Aorta (tissue), 5 donors: ENCODE measurements at regions of chr1 and their contacts with region 1.

Region 1: DNA sequence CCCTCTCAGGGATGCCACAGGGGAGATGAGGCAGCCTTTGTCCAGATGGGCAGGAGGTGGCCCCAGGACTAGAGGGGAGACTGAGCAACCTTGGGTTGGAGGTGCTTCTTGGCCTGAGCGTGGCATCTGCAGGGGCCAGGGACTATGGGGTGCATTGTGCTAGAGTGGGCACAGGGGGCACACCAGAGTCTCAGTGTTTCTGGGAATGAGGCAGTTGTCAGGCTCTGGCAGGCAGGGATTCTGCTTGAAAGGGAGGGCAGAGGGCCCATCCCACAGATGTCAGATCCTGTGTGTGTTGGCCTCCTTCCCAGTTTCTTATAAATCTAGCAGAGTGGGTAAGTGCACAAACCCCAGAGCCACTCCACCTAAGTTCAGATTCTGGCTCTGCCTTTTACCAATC is 13.7 kb downstream of the LGR6 start:
- DNase-seq: peak in 1 of 2 donors; percentile 71
- ATAC-seq: peak; percentile 62
- H3K4me3 ChIP-seq: no peak overlapping the region
- H3K27ac ChIP-seq: no peak overlapping the region
- H3K4me1 ChIP-seq: no peaks in the 10 kb centered on the region
- H3K27me3 ChIP-seq: no peaks in the 10 kb centered on the region

Region 2: DNA sequence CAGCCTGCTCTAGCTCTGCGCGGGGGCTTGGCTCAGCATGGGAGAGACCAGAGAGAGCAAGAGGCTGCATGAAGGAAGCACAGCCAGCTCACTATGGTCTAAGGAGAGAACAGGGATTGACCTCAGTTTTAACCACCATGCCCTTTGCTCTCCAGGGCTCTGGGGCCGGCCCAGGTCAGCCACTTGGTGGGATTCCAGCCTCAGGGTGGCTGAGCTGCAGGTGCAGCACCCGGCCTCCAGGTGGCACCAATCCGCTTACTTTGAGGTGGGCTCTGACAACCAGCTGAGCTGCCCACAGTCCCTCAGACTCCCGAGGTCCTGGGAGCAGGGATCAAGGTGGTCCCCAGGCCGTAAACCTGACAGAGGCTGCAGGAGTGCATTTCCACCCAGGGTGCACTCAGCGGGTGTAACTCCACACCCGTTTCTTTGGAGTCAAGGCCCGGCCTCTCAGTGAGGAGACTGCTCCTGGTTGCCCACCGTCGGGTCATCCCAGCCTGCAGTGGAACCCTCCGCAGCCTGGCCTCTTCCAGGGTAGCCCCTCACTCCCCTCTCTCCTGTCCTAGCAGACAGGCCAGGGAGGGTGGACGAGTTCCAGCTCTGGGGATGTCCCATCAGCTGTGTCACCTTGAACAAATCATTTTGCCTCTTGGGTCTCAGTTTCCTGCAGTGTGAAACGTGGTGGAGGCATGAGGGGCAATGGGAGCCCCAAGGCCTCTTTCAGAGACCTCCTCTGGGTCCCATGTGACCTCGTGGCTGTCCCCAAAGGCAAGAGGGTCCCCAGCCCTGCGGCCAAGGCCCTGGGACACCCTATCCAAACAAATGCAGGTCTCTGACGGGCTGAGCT is 14.3 kb before region 1 on chr1:
- intact Hi-C with region 1: loop called in 1 of 2 experiments (anchors 1 kb)
- DNase-seq: peak; percentile 67 to 90
- ATAC-seq: peak; percentile 79
- H3K4me3 ChIP-seq: peak overlapping the region; percentile 64 to 89
- H3K27ac ChIP-seq: peak overlapping the region in 1 of 2 donors; percentile 84
- H3K4me1 ChIP-seq: no peaks in the 10 kb centered on the region
- H3K27me3 ChIP-seq: no peaks in the 10 kb centered on the region

Region 3: GRCh38 chr1:202241376-202242079 is 34.2 kb after region 1 on chr1:
- intact Hi-C with region 1: loop called in 1 of 2 experiments (anchors 5 kb)
- DNase-seq: peak; percentile 82 to 88
- ATAC-seq: peak; percentile 80
- H3K4me3 ChIP-seq: no peak overlapping the region
- H3K27ac ChIP-seq: peak overlapping the region; percentile 34 to 46
- H3K4me1 ChIP-seq: peaks cover 0 to 4% of the 10 kb centered on the region in 2 donors
- H3K27me3 ChIP-seq: no peaks in the 10 kb centered on the region

Region 4: DNA sequence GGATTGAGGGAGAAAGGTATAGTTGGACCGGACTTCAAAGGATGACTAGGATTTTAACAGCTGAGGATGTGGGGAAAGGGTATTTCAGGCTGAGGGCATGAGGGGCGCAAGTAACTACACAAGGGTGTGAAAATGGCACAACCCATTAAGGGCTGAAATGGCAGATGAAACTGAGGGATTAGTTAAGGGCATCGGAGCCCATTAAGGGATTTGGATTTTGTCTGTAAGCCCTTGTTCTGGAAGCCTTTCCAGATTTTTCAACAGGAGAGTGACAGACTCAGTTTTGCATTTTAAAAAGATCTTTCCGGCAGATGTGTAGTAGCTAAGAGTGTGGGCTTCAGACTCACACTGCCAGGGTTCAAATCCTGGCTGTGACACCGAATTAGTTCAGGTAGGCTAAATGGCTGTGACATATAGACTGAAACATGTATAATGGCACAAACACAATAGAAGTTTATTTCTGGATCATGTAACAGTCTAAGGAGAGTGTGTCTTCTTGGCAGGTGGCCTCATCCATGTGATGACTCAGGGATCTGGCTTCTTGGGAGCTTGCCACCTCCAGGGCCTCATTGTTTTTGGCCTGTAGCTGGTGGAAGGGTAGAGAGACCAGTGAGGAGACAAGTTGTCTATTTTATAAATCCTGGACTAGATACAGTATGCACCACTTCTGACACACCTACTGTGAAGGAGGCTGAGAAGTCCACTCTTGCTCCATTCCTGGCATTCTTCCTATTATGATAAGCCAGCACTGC is 84.8 kb after region 1 on chr1:
- intact Hi-C with region 1: loop called in 1 of 2 experiments (anchors 5 kb)
- DNase-seq: peak in 1 of 2 donors; percentile 67
- ATAC-seq: peak; percentile 26
- H3K4me3 ChIP-seq: no peak overlapping the region
- H3K27ac ChIP-seq: peak overlapping the region in 1 of 2 donors; percentile 78
- H3K4me1 ChIP-seq: peaks cover 0 to 3% of the 10 kb centered on the region in 2 donors
- H3K27me3 ChIP-seq: no peaks in the 10 kb centered on the region